ENCODE measurements at regions of chr11 and their contacts with region 1.

Region 1: DNA sequence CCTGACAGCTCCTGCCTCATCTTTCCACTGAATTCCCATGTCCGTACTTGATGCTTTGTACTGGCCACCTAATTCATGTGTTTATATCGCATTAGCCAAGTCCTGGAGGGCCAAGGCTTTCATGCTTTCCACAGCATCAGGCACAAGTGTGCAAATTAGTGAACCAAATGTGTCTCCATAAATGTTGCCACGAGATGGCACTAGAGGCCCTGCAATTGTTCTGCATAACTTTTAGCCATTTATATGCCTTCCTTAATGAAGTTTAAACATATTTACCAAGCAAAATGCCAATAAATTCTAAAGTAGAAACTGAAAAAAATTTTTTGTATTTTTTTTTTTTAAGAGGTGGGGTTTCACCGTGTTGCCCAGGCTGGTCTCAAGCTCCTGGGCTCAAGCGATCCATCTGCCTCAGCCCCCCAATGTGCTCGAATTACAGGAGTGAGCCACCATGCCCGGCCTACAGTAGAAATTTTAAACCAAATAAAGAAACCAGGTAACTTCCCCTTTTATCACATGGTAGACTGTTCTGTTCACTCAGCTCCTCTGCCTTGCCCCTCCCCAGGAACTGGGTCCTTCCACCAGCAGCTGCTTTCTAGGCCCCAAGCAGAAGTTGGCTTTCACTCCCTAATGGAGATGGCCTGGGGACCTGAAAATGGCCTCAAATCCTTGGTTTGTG is 20.8 kb upstream of the IL18BP start:
- DNase-seq: peak; percentile 55
- H3K4me3 Mint-ChIP-seq: no peak overlapping the region
- H3K27ac Mint-ChIP-seq: no peak overlapping the region
- H3K4me1 Mint-ChIP-seq: peaks cover 3% of the 10 kb centered on the region
- H3K27me3 Mint-ChIP-seq: no peaks in the 10 kb centered on the region

Region 2: GRCh38 chr11:71774603-71775222 is 203.2 kb before region 1 on chr11:
- CTCF ChIA-PET with region 1: no interaction called
- POLR2A ChIA-PET with region 1: no interaction called
- intact Hi-C with region 1: no loop called
- DNase-seq: no peak
- H3K4me3 Mint-ChIP-seq: no peak overlapping the region
- H3K27ac Mint-ChIP-seq: no peak overlapping the region
- H3K4me1 Mint-ChIP-seq: no peaks in the 10 kb centered on the region
- H3K27me3 Mint-ChIP-seq: no peaks in the 10 kb centered on the region

Region 3: DNA sequence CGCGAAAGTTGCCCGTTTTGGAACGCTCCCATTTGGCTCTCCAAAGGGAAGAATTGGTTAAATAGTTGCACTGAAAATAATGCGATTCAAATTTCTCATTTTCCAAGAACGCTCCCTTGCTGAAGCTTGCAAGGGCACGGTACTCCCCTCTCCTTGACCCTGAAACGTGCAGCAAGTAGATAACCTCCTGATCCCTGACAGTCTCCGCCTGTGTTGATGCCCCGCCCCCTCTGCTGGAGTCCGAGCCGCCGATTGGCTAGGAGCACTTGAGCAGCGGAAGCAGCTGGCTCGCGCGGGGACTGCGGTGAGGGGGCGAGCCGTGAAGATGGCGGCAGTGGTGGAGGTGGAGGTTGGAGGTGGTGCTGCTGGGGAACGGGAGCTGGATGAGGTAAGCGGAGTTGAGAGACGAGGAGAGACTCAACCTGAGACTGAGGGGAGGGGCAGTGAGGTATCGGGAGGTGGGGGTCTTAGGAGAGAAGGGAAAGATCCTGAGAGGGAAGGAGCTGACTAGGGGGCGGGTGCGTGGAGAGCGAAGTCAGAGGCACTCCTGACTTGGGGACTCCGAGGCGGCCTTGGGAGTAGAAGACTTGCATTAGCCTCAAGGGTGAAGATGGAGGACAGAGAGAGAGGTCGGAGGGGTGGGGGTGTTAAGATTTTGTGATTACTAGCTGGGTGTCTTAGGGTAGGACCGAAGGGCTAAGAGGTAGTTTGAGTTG is 49.0 kb before region 1 on chr11 and contains the start of gene RNF121:
- CTCF ChIA-PET with region 1: interaction called, 17 read pairs
- POLR2A ChIA-PET with region 1: no interaction called
- intact Hi-C with region 1: no loop called
- DNase-seq: peak; percentile 99
- H3K4me3 Mint-ChIP-seq: peak within 1 kb of the TSS; percentile 86
- H3K27ac Mint-ChIP-seq: peak within 1 kb of the TSS; percentile 97
- H3K4me1 Mint-ChIP-seq: peaks cover 44% of the 10 kb centered on the region
- H3K27me3 Mint-ChIP-seq: no peaks in the 10 kb centered on the region
- total RNA-seq, gene RNF121: 34.9 to 37.1 TPM

Region 4: DNA sequence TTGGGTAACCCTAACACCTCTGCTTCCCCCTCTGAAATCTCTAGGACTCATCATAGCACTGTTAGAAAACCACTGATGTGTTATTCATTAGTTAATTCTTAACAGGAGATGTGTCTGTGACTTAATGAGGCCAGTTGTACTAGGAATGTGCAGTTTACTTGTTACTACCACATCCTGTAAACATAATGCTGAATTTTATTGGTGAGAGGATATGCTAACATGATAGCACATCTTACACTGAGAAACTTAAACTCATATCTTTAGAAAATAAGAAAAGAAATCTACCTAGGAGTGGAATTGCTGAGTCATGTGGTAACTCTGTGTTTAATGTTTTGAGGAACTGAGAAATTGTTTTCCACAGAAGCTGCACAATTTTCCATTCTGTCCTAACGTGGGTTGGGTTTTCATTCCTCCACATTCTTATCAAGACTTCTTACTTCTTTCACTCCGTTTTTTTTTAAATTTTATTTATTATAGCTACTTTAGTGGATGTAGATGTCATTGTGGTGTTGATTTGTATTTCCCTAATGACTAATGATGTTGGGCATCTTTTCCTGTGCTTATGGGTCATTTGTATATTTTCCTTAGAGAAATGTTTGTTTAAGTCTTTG is 15.3 kb before region 1 on chr11:
- CTCF ChIA-PET with region 1: interaction called, 20 read pairs
- POLR2A ChIA-PET with region 1: no interaction called
- intact Hi-C with region 1: no loop called
- DNase-seq: no peak
- H3K4me3 Mint-ChIP-seq: no peak overlapping the region
- H3K27ac Mint-ChIP-seq: peak overlapping the region; percentile 79
- H3K4me1 Mint-ChIP-seq: peaks cover 22% of the 10 kb centered on the region
- H3K27me3 Mint-ChIP-seq: no peaks in the 10 kb centered on the region

Region 5: DNA sequence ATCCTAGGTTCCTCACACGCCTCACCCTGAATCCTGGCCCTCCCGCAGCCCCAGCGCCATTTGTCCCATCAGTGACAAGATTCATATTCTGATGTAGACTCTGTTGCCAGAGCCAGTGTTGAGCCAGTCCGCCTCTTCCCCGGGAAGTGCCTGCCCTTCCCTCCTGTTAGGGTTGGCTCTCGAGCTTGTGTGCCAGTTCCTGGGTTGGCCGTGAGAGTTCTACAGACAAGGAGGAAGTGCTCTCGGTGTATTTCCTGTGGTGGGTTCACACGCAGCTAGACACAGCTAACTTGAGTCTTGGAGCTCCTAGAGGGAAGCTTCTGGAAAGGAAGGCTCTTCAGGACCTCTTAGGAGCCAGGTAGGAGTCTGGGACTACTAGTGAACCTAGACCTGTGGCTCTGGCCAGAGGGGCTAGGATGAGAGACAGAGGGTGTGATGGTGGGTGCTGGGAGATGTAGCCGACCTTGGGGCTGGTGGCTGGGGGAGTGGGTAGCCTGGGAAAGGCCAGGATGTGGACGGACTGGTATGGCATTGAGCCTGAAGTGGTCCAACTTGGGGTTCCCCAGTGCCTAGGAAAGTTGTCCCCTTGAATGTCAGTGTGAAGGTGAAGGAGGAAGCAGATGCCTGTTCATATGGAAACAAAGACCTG is 20.9 kb after region 1 on chr11 and contains the start of gene IL18BP:
- CTCF ChIA-PET with region 1: interaction called, 15 read pairs
- POLR2A ChIA-PET with region 1: no interaction called
- intact Hi-C with region 1: no loop called
- DNase-seq: peak; percentile 39
- H3K4me3 Mint-ChIP-seq: peak within 1 kb of the TSS; percentile 52
- H3K27ac Mint-ChIP-seq: peak within 1 kb of the TSS; percentile 81
- H3K4me1 Mint-ChIP-seq: peaks cover 23% of the 10 kb centered on the region
- H3K27me3 Mint-ChIP-seq: no peaks in the 10 kb centered on the region
- total RNA-seq, gene IL18BP: 6.6 to 9.3 TPM

Region 6: DNA sequence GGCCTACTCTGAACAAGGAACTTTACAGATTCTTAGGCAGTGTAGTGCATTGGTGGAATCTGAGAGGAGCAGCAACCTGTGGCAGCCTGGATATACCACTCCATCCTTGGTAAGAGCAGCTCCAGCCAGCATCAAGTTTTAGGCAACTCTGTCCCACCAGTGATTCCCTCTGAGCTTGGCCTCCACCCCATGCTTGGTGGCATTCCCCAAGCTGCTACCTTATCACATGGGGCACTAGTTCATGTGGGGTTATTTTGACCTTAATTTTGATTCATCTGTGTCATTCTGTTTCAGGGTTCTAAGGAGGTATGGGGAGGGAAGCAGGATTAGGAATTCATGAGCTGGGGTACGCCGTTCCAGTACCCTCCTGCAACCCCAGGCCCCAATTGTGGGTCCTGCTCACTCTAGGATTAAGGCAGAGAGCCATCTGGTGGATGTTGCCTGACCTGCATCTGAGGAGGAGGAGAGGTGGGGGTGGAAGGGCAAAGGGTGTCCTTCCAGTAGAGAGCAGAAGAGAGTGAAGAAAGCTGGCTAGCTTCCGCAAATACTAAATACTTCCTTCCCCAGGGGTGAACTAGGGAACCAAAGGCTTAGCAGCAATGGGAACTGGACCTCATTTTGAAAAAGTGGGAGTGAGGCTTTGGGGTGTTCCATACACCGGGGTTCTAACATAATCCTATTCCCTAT is 113.3 kb after region 1 on chr11:
- CTCF ChIA-PET with region 1: interaction called, 24 read pairs
- POLR2A ChIA-PET with region 1: no interaction called
- intact Hi-C with region 1: loop called (anchors 1 kb)
- DNase-seq: peak; percentile 76
- H3K4me3 Mint-ChIP-seq: no peak overlapping the region
- H3K27ac Mint-ChIP-seq: no peak overlapping the region
- H3K4me1 Mint-ChIP-seq: peaks cover 11% of the 10 kb centered on the region
- H3K27me3 Mint-ChIP-seq: no peaks in the 10 kb centered on the region

Region 7: GRCh38 chr11:72293910-72294615 is 316.2 kb after region 1 on chr11:
- CTCF ChIA-PET with region 1: no interaction called
- POLR2A ChIA-PET with region 1: no interaction called
- intact Hi-C with region 1: no loop called
- DNase-seq: no peak
- H3K4me3 Mint-ChIP-seq: no peak overlapping the region
- H3K27ac Mint-ChIP-seq: no peak overlapping the region
- H3K4me1 Mint-ChIP-seq: no peaks in the 10 kb centered on the region
- H3K27me3 Mint-ChIP-seq: no peaks in the 10 kb centered on the region

Measured in activated CD4-positive, alpha-beta memory T cell treated with anti-CD3 and anti-CD28 coated beads for 36 hours (primary cell).